ENCODE measurements at regions of chr4 and their contacts with region 1.

Region 1: DNA sequence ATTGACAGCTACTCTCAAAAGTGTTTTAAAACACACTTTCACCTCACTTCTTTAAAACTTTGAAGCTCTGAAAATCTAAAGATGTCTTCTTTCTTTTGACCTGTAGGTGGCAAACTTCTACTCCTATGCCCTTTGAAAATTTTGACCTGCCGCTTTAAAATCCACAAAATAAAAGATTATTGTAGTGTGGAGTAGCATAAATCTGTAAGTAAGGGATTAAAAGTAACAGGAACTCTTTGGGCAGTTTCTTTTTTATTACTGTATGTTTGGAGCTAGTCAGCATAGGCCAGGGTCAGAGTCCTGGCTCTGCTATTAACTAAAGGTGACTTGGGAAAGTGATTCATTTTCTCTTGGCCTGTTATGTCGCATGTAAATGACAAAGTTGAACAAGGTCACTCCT is 25.5 kb downstream of the BBS12 start:
- DNase-seq: peak in 3 of 14 experiments; percentile 33 to 57 (median 53)
- ATAC-seq: no peak
- H3K4me3 ChIP-seq: no peak overlapping the region
- H3K4me3 Mint-ChIP-seq: no peak overlapping the region
- H3K27ac ChIP-seq: no peak overlapping the region
- H3K27ac Mint-ChIP-seq: no peak overlapping the region
- H3K4me1 ChIP-seq: no peaks in the 10 kb centered on the region
- H3K4me1 Mint-ChIP-seq: peaks cover 11% of the 10 kb centered on the region
- H3K27me3 ChIP-seq: no peaks in the 10 kb centered on the region
- H3K27me3 Mint-ChIP-seq: peaks cover 31% of the 10 kb centered on the region
- CTCF ChIP-seq: peak; percentile 82

Region 2: GRCh38 chr4:122673252-122673651 is 84.8 kb before region 1 on chr4:
- CTCF ChIA-PET with region 1: no interaction called
- POLR2A ChIA-PET with region 1: no interaction called
- intact Hi-C with region 1: no loop called
- DNase-seq: no peak
- ATAC-seq: no peak
- H3K4me3 ChIP-seq: no peak overlapping the region
- H3K4me3 Mint-ChIP-seq: no peak overlapping the region
- H3K27ac ChIP-seq: no peak overlapping the region
- H3K27ac Mint-ChIP-seq: no peak overlapping the region
- H3K4me1 ChIP-seq: peaks cover 2% of the 10 kb centered on the region
- H3K4me1 Mint-ChIP-seq: peaks cover 12% of the 10 kb centered on the region
- H3K27me3 ChIP-seq: no peaks in the 10 kb centered on the region
- H3K27me3 Mint-ChIP-seq: peaks cover 5% of the 10 kb centered on the region
- CTCF ChIP-seq: no peak

Region 3: GRCh38 chr4:122798101-122798500 is 40.1 kb after region 1 on chr4:
- CTCF ChIA-PET with region 1: no interaction called
- POLR2A ChIA-PET with region 1: no interaction called
- intact Hi-C with region 1: no loop called
- DNase-seq: no peak
- ATAC-seq: no peak
- H3K4me3 ChIP-seq: no peak overlapping the region
- H3K4me3 Mint-ChIP-seq: no peak overlapping the region
- H3K27ac ChIP-seq: no peak overlapping the region
- H3K27ac Mint-ChIP-seq: no peak overlapping the region
- H3K4me1 ChIP-seq: no peaks in the 10 kb centered on the region
- H3K4me1 Mint-ChIP-seq: no peaks in the 10 kb centered on the region
- H3K27me3 ChIP-seq: no peaks in the 10 kb centered on the region
- H3K27me3 Mint-ChIP-seq: peaks cover 5% of the 10 kb centered on the region
- CTCF ChIP-seq: no peak

Region 4: GRCh38 chr4:122914292-122914904 is 156.4 kb after region 1 on chr4:
- CTCF ChIA-PET with region 1: interaction called, 12 read pairs
- POLR2A ChIA-PET with region 1: no interaction called
- intact Hi-C with region 1: loop called (anchors 1 to 5 kb)
- DNase-seq: peak in 3 of 14 experiments; percentile 6 to 61 (median 41)
- ATAC-seq: peak; percentile 75
- H3K4me3 ChIP-seq: no peak overlapping the region
- H3K4me3 Mint-ChIP-seq: no peak overlapping the region
- H3K27ac ChIP-seq: no peak overlapping the region
- H3K27ac Mint-ChIP-seq: no peak overlapping the region
- H3K4me1 ChIP-seq: no peaks in the 10 kb centered on the region
- H3K4me1 Mint-ChIP-seq: no peaks in the 10 kb centered on the region
- H3K27me3 ChIP-seq: no peaks in the 10 kb centered on the region
- H3K27me3 Mint-ChIP-seq: no peaks in the 10 kb centered on the region
- CTCF ChIP-seq: peak; percentile 76

Region 5: DNA sequence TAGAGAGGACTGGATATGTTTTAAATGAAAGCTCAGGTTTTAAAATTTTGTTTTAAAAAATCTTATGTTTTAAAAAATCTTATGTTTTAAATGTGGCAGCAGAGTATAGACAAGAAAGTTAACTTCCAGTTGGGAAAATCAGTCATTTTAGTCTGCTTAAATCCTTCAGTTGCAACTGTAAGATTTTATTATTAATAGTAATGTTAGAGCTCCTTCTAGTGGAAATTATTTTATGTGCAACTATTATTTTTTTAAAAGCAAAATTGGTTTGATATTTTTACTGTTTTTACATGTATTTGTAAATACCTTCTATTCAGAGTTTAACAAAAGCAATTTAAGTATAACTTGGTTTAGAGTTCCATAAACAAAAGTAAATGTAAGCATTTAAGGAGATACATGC is 172.8 kb after region 1 on chr4:
- CTCF ChIA-PET with region 1: interaction called, 10 read pairs
- POLR2A ChIA-PET with region 1: no interaction called
- intact Hi-C with region 1: loop called (anchors 1 to 2 kb)
- DNase-seq: peak in 3 of 14 experiments; percentile 16 to 44 (median 28)
- ATAC-seq: no peak
- H3K4me3 ChIP-seq: no peak overlapping the region
- H3K4me3 Mint-ChIP-seq: no peak overlapping the region
- H3K27ac ChIP-seq: no peak overlapping the region
- H3K27ac Mint-ChIP-seq: no peak overlapping the region
- H3K4me1 ChIP-seq: no peaks in the 10 kb centered on the region
- H3K4me1 Mint-ChIP-seq: peaks cover 8% of the 10 kb centered on the region
- H3K27me3 ChIP-seq: no peaks in the 10 kb centered on the region
- H3K27me3 Mint-ChIP-seq: no peaks in the 10 kb centered on the region
- CTCF ChIP-seq: peak; percentile 67

Region 6: GRCh38 chr4:124322234-124323065 is 1564.4 kb after region 1 on chr4:
- CTCF ChIA-PET with region 1: no interaction called
- POLR2A ChIA-PET with region 1: no interaction called
- intact Hi-C with region 1: loop called in 1 of 2 experiments (anchors 5 kb)
- DNase-seq: peak in 3 of 14 experiments; percentile 18 to 21 (median 20)
- ATAC-seq: no peak
- H3K4me3 ChIP-seq: no peak overlapping the region
- H3K4me3 Mint-ChIP-seq: no peak overlapping the region
- H3K27ac ChIP-seq: no peak overlapping the region
- H3K27ac Mint-ChIP-seq: no peak overlapping the region
- H3K4me1 ChIP-seq: no peaks in the 10 kb centered on the region
- H3K4me1 Mint-ChIP-seq: no peaks in the 10 kb centered on the region
- H3K27me3 ChIP-seq: no peaks in the 10 kb centered on the region
- H3K27me3 Mint-ChIP-seq: no peaks in the 10 kb centered on the region
- CTCF ChIP-seq: peak; percentile 67